ENCODE measurements at regions of chr17 and their contacts with region 1.

Region 1: DNA sequence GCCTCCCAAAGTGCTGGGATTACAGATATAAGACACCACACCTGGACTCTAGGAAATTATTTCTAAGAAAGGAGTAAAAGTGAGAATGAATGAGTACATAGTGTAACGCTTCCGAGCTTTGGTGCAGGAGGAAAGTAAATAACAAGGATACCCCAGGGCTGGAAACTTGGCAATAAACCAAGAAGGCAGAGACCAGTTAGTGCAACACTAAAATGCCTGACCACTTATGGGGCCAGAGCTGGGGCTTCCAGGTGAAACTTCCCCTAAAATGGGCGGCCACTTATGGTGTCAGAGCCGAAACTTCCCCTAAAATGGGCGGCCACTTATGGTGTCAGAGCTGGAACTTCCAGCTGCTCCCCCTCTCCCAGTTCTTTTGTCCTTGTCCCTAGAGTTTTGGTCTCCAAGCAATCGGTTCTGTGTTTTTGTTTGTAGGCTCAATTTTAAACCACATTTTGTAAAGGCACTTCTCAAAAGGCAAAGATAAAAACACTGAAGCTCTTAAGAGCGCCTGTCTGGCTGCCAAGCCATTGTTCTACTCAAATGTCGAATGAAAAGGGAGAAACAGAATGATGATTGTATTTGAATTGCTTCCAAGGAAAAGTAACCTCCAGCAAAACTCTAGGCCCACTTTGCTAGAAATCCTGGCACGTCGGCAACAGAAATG is 63.9 kb downstream of the NXN start:
- DNase-seq: no peak
- ATAC-seq: peak; percentile 27 to 44
- H3K4me3 ChIP-seq: no peak overlapping the region
- H3K27ac ChIP-seq: peak overlapping the region; percentile 58 to 72 (median 65)
- H3K4me1 ChIP-seq: peaks cover 15 to 23% of the 10 kb centered on the region in 2 donors
- H3K27me3 ChIP-seq: no peaks in the 10 kb centered on the region
- CTCF ChIP-seq: no peak
- POLR2A ChIP-seq: no peak

Region 2: GRCh38 chr17:954431-955164 is 38.9 kb after region 1 on chr17:
- in situ Hi-C with region 1: no loop called
- intact Hi-C with region 1: loop called (anchors 1 kb)
- DNase-seq: peak in 1 of 2 donors; percentile 31
- ATAC-seq: no peak
- H3K4me3 ChIP-seq: no peak overlapping the region
- H3K27ac ChIP-seq: peak overlapping the region; percentile 65 to 91 (median 88)
- H3K4me1 ChIP-seq: peaks cover 31 to 48% of the 10 kb centered on the region in 2 donors
- H3K27me3 ChIP-seq: no peaks in the 10 kb centered on the region
- CTCF ChIP-seq: no peak
- POLR2A ChIP-seq: no peak

Region 3: DNA sequence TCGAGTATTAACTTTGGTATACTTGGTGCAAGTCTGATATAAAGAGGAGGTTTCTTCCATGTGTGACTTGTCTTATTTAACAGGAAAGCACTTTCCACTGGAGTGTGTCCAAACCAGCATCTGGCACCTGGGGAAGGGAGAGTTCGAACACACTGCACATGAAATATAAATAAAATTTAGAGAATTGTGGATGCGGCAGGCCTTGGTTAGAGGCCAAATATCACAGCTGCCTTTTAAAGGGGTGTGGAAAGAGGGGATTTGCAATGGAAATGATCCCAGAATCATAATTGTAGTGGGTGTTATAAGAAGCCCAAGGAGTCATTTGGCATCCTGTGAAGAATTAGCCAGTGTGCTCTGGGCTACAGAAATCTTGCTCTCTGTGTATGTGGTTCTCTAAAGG is 68.3 kb after region 1 on chr17:
- in situ Hi-C with region 1: no loop called
- intact Hi-C with region 1: no loop called
- DNase-seq: no peak
- ATAC-seq: no peak
- H3K4me3 ChIP-seq: no peak overlapping the region
- H3K27ac ChIP-seq: no peak overlapping the region
- H3K4me1 ChIP-seq: peaks cover 10 to 12% of the 10 kb centered on the region in 2 donors
- H3K27me3 ChIP-seq: no peaks in the 10 kb centered on the region
- CTCF ChIP-seq: no peak
- POLR2A ChIP-seq: no peak